HCT116 (cell line): ENCODE measurements at regions of chr10 and their contacts with region 1.

Region 1: GRCh38 chr10:80472234-80473095 is 18.4 kb downstream of the TSPAN14 start:
- DNase-seq: no peak
- ATAC-seq: 0 out of 2 replicates have a peak, but pooled peaks have one; percentile 30
- H3K4me3 ChIP-seq: peak overlapping the region in 1 of 2 experiments; percentile 23; a peak in 1 of 4 replicates
- H3K27ac ChIP-seq: peak overlapping the region; percentile 51
- H3K4me1 ChIP-seq: peaks cover 53 to 86% of the 10 kb centered on the region in 2 experiments
- H3K27me3 ChIP-seq: no peaks in the 10 kb centered on the region
- CTCF ChIP-seq: peak in 2 of 3 experiments; percentile 2 to 26; a peak in 1 of 6 replicates
- POLR2A ChIP-seq: no peak
- RAD21 ChIP-seq: no peak

Region 2: DNA sequence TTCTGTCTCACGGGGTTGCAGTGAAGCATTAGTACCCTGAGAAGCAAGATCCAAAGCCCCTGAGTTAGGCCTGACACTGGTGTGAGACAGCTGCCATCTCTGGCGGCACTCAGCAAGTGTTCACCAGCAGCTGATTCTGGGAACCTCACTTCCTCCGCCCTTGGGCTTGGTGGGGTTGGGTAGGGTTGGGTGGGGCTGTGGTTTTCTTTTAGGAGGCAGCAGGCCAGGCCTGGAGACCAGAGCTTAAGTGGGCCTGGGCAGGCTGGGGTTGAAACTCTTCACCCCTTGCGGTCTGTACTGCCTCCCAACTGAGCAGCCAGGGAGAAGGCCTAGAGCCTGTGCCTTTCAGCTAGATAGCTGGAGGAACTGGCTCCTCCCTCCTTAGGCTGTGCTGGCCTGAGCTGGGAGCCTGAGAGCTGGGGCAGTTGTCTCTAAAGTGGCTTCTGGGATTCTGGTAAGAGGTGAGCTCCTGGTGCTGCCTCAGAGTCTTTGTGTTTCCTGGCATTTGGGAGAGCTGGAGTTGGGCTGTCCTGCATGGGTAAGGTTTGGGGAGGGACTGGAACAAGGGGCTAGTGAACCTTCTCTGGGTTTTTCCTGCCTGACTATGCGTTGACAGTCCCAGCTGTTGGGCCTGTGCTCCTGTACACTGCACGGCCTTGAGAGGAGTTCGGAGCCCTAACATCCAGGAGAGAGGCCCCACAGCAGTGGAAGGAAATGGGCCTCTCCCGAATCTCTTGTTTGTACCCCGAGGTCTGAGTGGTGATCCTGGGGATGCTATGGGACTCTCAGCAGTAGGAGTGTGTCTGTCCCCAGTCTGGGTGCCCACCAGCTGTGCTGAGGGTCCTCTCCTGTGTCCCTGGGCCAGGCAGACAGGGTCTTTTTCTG is 13.2 kb before region 1 on chr10:
- CTCF ChIA-PET with region 1: interaction called, 10 read pairs
- POLR2A ChIA-PET with region 1: interaction called, 11 read pairs
- RAD21 ChIA-PET with region 1: interaction called in 1 of 2 experiments, 3 read pairs
- intact Hi-C with region 1: no loop called
- DNase-seq: no peak
- ATAC-seq: peak; percentile 65
- H3K4me3 ChIP-seq: peak overlapping the region in 1 of 2 experiments; percentile 47; a peak in 1 of 4 replicates
- H3K27ac ChIP-seq: peak overlapping the region; percentile 79
- H3K4me1 ChIP-seq: peaks cover 81 to 92% of the 10 kb centered on the region in 2 experiments
- H3K27me3 ChIP-seq: no peaks in the 10 kb centered on the region
- CTCF ChIP-seq: no peak
- POLR2A ChIP-seq: no peak
- RAD21 ChIP-seq: 0 out of 2 replicates have a peak, but pooled peaks have one; percentile 4

Region 3: DNA sequence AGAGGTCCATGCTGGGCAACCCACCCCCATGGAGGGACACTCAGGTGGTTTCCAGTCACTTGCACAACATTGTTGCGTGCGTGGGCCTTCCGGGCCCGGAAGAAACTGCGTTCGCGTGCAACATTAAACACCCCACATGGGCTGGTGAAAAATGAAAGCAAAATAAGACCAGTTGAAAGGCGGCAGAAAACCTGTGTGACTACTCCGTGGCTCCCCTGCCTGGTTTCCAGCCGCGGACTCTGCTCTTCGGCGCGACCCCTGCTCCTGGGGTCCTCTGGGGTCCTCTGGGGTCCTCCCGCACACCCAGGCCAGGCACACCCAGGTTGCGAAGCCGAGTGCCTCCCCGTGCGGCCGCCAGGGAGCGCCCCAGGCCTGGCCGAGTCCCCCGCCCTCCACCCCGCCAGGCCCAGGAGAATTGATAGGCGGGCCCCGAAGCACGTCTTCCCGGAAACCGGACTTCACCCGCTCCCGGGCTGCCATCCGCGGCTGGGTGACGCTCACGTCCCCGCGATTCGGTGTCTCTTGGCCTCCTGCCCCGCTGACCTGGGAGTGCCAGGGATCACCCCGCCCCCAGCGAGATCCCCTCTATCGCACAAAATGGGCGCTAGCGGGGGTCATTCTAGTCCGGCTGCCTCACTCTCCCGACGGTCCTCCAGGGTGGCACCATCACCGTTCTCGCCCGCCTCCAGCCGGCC is 63.4 kb after region 1 on chr10:
- CTCF ChIA-PET with region 1: no interaction called
- POLR2A ChIA-PET with region 1: no interaction called
- RAD21 ChIA-PET with region 1: no interaction called
- intact Hi-C with region 1: no loop called
- DNase-seq: peak; percentile 48
- ATAC-seq: peak; percentile 96
- H3K4me3 ChIP-seq: peak overlapping the region; percentile 73 to 83
- H3K27ac ChIP-seq: peak overlapping the region; percentile 74
- H3K4me1 ChIP-seq: peaks cover 3 to 19% of the 10 kb centered on the region in 2 experiments; a peak in 2 of 4 replicates
- H3K27me3 ChIP-seq: no peaks in the 10 kb centered on the region
- CTCF ChIP-seq: peak; percentile 62 to 87 (median 77)
- POLR2A ChIP-seq: peak; percentile 38
- RAD21 ChIP-seq: peak; percentile 69